ENCODE measurements at regions of chr4 and their contacts with region 1.

Region 1: GRCh38 chr4:24686871-24687680 is 102.7 kb upstream of the DHX15 start:
- DNase-seq: no peak
- H3K4me3 Mint-ChIP-seq: no peak overlapping the region
- H3K27ac Mint-ChIP-seq: no peak overlapping the region
- H3K4me1 Mint-ChIP-seq: no peaks in the 10 kb centered on the region
- H3K27me3 Mint-ChIP-seq: peaks cover 9% of the 10 kb centered on the region

Region 2: GRCh38 chr4:24488399-24489164 is 198.5 kb before region 1 on chr4:
- intact Hi-C with region 1: loop called (anchors 1 kb)
- DNase-seq: peak; percentile 41
- H3K4me3 Mint-ChIP-seq: no peak overlapping the region
- H3K27ac Mint-ChIP-seq: no peak overlapping the region
- H3K4me1 Mint-ChIP-seq: no peaks in the 10 kb centered on the region
- H3K27me3 Mint-ChIP-seq: peaks cover 12% of the 10 kb centered on the region

Region 3: DNA sequence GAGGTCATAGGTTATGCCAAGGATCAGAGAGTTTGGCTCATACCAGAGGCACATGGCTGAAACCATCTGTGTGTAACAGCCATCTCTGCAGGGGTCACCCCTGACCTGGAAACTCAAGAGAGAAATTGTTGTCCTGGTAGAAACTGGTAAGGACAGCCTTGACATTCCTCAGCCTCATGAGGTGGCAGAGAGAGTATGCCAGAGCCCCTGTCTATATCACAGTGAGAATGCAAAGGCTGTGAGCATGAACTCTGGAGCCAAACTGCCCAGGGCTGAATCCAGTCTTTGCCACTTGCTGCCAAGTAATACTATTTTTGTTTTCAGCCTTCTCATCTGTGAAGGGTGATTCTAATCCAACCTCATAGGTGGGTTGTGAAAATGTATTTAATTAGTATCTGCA is 262.9 kb after region 1 on chr4:
- intact Hi-C with region 1: no loop called
- DNase-seq: no peak
- H3K4me3 Mint-ChIP-seq: no peak overlapping the region
- H3K27ac Mint-ChIP-seq: no peak overlapping the region
- H3K4me1 Mint-ChIP-seq: no peaks in the 10 kb centered on the region
- H3K27me3 Mint-ChIP-seq: no peaks in the 10 kb centered on the region